A673 (cell line): ENCODE measurements at regions of chr17 and their contacts with region 1.

Region 1: GRCh38 chr17:67293251-67294203 is 48.5 kb upstream of the HELZ start:
- DNase-seq: peak; percentile 73
- H3K4me3 ChIP-seq: no peak overlapping the region
- H3K27ac ChIP-seq: no peak overlapping the region
- H3K4me1 ChIP-seq: peaks cover 6% of the 10 kb centered on the region
- H3K27me3 ChIP-seq: no peaks in the 10 kb centered on the region
- CTCF ChIP-seq: peak; percentile 85

Region 2: DNA sequence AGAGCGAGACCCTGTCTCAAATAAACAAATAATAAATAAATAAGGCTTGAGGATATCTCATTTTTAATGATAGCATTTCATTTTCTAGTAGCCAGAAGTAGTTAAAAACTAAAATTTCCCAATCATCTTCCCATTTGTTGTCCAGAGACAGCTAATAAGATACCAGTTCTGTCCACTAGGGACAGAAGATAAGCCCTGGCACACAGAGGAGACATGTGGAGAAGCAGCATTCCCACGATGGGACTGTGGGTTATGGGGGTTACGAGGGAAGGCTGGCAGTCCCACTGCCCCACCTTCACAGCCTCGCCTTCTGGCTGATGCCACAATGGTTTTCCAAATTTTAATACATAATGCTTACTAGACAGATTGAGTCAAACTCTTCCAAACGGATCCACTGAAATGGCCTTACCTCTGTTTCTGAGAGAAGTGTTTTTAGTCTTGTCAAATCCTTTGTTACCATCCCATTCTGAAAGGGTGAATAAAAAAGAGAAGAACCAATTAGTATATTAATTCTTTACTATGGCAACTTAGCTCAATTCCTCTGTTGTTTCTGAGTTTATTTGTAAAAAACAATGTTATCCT is 92.7 kb before region 1 on chr17:
- CTCF ChIA-PET with region 1: interaction called, 15 read pairs
- POLR2A ChIA-PET with region 1: no interaction called
- intact Hi-C with region 1: no loop called
- DNase-seq: peak; percentile 38
- H3K4me3 ChIP-seq: no peak overlapping the region
- H3K27ac ChIP-seq: no peak overlapping the region
- H3K4me1 ChIP-seq: peaks cover 7% of the 10 kb centered on the region
- H3K27me3 ChIP-seq: no peaks in the 10 kb centered on the region
- CTCF ChIP-seq: peak; percentile 64

Region 3: GRCh38 chr17:67245073-67245755 is 48.3 kb before region 1 on chr17 and contains the start of gene HELZ:
- CTCF ChIA-PET with region 1: interaction called, 12 read pairs
- POLR2A ChIA-PET with region 1: no interaction called
- intact Hi-C with region 1: no loop called
- DNase-seq: peak; percentile 87
- H3K4me3 ChIP-seq: peak within 1 kb of the TSS; percentile 88
- H3K27ac ChIP-seq: peak within 1 kb of the TSS; percentile 88
- H3K4me1 ChIP-seq: peaks cover 19% of the 10 kb centered on the region
- H3K27me3 ChIP-seq: no peaks in the 10 kb centered on the region
- CTCF ChIP-seq: no peak
- total RNA-seq, gene HELZ: 49.1 and 57.3 TPM in 2 replicates

Region 4: DNA sequence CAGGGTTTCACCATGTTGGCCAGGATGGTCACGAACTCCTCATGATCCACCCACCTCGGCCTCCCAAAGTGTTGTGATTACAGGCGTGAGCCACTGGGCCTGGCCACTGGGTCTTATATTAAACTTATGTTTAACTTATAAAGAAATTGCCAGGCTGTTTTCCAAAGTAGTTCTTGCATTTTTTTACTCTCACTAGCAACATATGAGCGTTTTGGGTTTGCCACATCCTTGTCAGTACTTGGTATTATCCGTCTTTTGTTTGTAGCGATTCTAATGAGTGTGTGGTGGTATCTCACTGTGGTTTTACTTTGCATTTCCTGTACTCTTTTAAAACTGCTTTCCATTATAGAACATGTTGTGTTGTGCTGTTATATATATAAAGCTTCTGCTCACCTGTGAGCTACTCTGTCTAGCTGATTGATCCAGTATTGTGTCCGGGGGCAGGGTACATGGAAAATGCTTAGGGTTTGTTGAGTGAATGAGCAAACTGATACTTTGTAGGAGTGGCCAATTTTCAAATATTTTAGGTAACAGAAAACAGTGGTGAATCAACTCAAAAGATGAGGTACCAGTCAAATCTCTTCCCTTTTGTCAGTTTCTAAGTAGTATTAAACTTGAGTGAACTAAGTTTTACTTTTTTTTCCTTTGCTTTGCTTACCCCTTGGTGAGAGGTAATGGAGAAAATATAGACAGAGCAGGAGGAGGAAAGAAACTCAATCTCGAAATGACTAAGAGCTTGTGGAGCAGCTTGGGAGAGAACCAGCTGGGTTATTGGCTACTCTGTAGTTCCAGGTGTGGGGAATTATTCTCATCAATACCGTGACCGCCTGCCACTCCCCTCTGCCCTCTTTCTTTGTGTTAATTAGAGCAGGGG is 159.4 kb after region 1 on chr17:
- CTCF ChIA-PET with region 1: no interaction called
- POLR2A ChIA-PET with region 1: no interaction called
- intact Hi-C with region 1: no loop called
- DNase-seq: no peak
- H3K4me3 ChIP-seq: no peak overlapping the region
- H3K27ac ChIP-seq: no peak overlapping the region
- H3K4me1 ChIP-seq: peaks cover 11% of the 10 kb centered on the region
- H3K27me3 ChIP-seq: no peaks in the 10 kb centered on the region
- CTCF ChIP-seq: no peak